Activated CD8-positive, alpha-beta memory T cell treated with anti-CD3 and anti-CD28 coated beads, Interleukin-2, amount 10 ng/mL, durations not matched to agents 7 days and 5 days (primary cell): ENCODE measurements at regions of chr9 and their contacts with region 1.

Region 1: GRCh38 chr9:136944519-136945279 is at the starts of genes C8G and FBXW5:
- DNase-seq: peak; percentile 96
- ATAC-seq: peak; percentile 81
- H3K4me3 Mint-ChIP-seq: peak within 1 kb of the TSS; percentile 79
- H3K27ac Mint-ChIP-seq: peak within 1 kb of the TSS; percentile 81
- H3K4me1 Mint-ChIP-seq: peaks cover 18% of the 10 kb centered on the region
- H3K27me3 Mint-ChIP-seq: no peaks in the 10 kb centered on the region
- total RNA-seq, gene C8G: 1.7 TPM in 1 of 2 experiments, not detected in the other
- total RNA-seq, gene FBXW5: 106 to 107 TPM

Region 2: GRCh38 chr9:136711751-136712689 is 232.7 kb before region 1 on chr9 and contains the start of gene DIPK1B:
- CTCF ChIA-PET with region 1: no interaction called
- DNase-seq: no peak
- ATAC-seq: peak; percentile 10
- H3K4me3 Mint-ChIP-seq: no peak within 1 kb of the TSS
- H3K27ac Mint-ChIP-seq: no peak within 1 kb of the TSS
- H3K4me1 Mint-ChIP-seq: peaks cover 3% of the 10 kb centered on the region
- H3K27me3 Mint-ChIP-seq: peaks cover 46% of the 10 kb centered on the region
- total RNA-seq, gene DIPK1B: not detected

Region 3: GRCh38 chr9:136728080-136728547 is 216.6 kb before region 1 on chr9:
- CTCF ChIA-PET with region 1: no interaction called
- DNase-seq: peak; percentile 92
- ATAC-seq: peak; percentile 79
- H3K4me3 Mint-ChIP-seq: peak overlapping the region; percentile 92
- H3K27ac Mint-ChIP-seq: no peak overlapping the region
- H3K4me1 Mint-ChIP-seq: peaks cover 38% of the 10 kb centered on the region
- H3K27me3 Mint-ChIP-seq: peaks cover 4% of the 10 kb centered on the region

Region 4: DNA sequence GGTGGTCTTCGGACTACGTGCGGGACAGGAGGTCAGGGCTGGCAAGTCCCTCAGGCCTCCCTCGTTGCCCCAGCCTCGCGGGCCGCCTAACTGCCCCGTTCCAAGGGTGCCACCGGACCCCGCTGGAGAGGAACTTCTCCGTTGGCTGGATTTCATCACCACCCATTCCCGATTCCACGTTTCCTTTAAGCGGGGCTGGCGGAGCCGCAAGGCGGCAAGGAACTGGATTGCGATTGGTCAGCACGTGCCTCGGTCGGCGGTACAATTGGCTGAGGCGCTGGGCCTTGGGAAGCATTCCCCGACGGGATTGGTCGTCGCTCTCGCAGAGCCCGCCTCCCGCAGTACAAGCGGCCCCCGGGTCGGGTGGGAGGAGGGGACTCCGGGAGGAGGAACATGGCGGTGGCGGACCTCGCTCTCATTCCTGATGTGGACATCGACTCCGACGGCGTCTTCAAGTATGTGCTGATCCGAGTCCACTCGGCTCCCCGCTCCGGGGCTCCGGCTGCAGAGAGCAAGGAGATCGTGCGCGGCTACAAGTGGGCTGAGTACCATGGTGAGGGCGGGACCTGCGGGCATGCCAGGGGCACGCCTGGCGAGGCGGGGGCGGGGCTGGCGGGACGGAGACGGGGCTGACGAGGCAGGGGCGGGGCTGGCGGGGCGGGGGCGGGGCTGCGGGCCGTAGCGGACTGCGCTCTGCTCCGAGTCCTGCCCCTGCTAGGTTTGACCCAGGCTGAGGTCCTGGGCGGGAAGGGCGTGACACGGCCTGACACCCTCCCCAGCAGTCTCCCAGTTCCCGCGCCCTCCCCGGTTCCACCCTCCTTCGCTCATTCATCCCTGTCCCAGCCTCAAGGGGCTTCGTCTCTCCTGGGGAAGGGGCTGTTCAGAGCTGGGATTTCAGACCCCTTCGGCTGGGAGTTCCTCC is 95.4 kb before region 1 on chr9 and contains the start of gene PHPT1:
- CTCF ChIA-PET with region 1: interaction called, 16 read pairs
- DNase-seq: peak; percentile 98
- ATAC-seq: peak; percentile 93
- H3K4me3 Mint-ChIP-seq: peak within 1 kb of the TSS; percentile 88
- H3K27ac Mint-ChIP-seq: peak within 1 kb of the TSS; percentile 92
- H3K4me1 Mint-ChIP-seq: peaks cover 16% of the 10 kb centered on the region
- H3K27me3 Mint-ChIP-seq: peaks cover 20% of the 10 kb centered on the region
- total RNA-seq, gene PHPT1: 96.8 to 116 TPM

Region 5: DNA sequence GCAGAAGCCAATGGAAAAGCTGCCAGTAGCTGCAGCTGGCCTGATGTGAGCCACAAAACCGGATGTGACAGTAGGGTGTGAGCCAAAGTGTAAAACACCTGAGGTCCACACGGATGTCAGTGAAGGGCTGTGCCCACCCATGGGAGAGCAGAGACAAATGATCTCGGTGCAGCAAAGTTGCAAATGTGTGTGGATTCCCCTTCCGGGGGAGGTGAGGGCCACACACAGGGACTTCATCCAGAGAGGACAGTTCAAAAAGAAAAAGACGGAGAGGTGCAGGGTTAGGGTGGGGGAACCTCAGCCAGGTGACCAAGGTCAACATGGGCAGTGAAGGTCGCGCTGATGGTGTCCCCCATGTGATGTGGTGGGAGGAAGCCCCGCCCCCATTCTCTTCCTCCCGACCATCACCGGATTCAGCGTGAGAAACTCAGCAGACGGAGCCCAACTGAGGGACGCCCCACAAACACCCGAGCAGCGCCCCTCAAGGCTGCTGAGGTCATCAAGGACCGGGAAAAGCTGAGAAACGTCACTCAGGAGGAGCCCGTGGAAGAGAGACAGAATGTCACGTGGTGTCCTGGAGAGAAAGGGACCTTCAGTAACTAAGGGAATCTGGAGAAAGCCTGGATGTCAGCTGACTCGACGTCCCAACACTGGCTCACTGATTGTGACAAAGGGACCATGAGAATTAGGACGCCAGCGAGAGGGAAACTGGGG is 21.2 kb after region 1 on chr9:
- CTCF ChIA-PET with region 1: interaction called, 15 read pairs
- DNase-seq: peak; percentile 81
- ATAC-seq: peak; percentile 72
- H3K4me3 Mint-ChIP-seq: peak overlapping the region; percentile 58
- H3K27ac Mint-ChIP-seq: peak overlapping the region; percentile 86
- H3K4me1 Mint-ChIP-seq: peaks cover 36% of the 10 kb centered on the region
- H3K27me3 Mint-ChIP-seq: no peaks in the 10 kb centered on the region

Region 6: GRCh38 chr9:136991993-136992818 is 47.5 kb after region 1 on chr9 and contains the start of gene PAXX:
- CTCF ChIA-PET with region 1: interaction called, 25 read pairs
- DNase-seq: peak; percentile 96
- ATAC-seq: peak; percentile 88
- H3K4me3 Mint-ChIP-seq: peak within 1 kb of the TSS; percentile 84
- H3K27ac Mint-ChIP-seq: peak within 1 kb of the TSS; percentile 82
- H3K4me1 Mint-ChIP-seq: peaks cover 32% of the 10 kb centered on the region
- H3K27me3 Mint-ChIP-seq: peaks cover 9% of the 10 kb centered on the region
- total RNA-seq, gene PAXX: 68.6 to 94.8 TPM

Region 7: DNA sequence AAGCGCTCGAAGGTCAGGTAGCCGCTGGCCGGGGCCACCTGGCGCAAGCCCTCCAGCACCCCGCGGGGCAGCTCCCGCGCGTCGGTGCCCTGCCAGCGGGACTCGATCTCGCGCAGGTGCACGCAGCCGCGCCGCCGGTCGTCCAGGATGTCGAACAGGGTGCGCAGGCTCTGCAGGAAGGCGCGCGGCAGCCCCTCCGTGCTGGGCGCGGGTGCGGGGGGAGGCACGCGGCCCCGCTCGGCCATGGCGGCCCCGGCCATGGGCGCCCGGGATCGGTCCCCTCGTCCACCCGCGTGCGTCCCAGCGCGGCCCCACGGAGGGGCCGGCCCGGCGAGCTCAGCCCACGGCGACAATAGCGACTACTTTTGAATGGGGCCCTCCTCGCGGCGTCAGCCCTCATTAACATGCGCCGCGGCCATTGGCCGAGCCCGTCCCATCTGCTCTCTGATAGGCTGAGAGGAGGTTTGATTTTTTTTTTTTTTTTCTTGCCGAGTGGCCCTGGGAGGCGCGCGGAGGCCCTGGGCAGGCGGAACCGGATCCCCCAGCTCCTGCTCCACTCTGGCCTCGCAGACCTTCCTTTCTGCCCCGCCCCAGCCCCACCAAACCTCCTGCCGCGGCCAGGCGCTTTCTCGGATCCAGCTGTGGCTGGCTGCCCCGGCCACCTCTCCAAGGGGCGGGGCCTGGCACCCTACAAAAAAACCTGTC is 125.7 kb after region 1 on chr9 and contains the start of gene SAPCD2:
- CTCF ChIA-PET with region 1: interaction called, 22 read pairs
- DNase-seq: peak; percentile 93
- ATAC-seq: peak; percentile 91
- H3K4me3 Mint-ChIP-seq: peak within 1 kb of the TSS; percentile 78
- H3K27ac Mint-ChIP-seq: peak within 1 kb of the TSS; percentile 83
- H3K4me1 Mint-ChIP-seq: peaks cover 27% of the 10 kb centered on the region
- H3K27me3 Mint-ChIP-seq: no peaks in the 10 kb centered on the region
- total RNA-seq, gene SAPCD2: 31.9 to 40.1 TPM

Region 8: DNA sequence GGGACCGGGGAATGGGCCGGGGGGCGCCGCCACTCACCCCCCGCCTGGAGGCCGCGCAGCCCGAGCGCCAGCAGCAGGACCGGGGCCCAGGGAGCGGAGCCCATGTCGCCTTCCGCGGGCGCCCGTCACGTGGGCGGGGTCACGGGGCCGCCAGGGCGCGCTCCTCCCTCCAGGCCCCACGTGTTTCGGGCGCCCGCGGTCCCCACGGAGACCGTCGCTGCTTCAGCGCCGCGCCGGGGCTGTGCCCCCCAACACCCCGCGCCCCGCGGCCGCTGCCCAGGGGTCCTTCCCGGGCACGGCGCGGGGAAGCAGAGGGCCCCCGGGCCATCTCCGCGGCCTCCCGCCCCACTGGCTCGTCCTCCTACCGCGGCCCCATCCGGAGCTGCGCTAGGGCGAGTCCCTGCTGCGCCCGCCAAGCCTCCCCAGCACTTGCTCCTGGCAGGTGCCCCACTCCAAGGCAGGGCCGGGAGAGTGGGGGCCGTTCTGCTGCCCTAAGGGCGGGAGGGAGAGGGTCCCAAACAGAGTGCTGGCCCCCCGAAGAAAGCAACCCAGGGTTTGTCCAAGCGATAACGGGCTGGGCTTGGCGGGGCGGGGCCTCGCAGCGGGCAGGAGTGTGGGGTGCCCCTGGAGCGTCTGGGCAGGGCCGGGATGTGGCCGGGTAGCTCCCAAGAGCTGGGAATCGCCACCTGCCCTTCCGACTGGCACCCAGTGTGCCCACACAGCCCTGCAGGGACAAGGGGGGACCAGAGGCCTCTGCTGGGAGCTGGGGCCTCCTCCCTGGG is 170.1 kb after region 1 on chr9 and contains the start of gene DPP7:
- CTCF ChIA-PET with region 1: no interaction called
- DNase-seq: peak; percentile 85
- ATAC-seq: peak; percentile 96
- H3K4me3 Mint-ChIP-seq: peak within 1 kb of the TSS; percentile 66
- H3K27ac Mint-ChIP-seq: peak within 1 kb of the TSS; percentile 52
- H3K4me1 Mint-ChIP-seq: peaks cover 10% of the 10 kb centered on the region
- H3K27me3 Mint-ChIP-seq: no peaks in the 10 kb centered on the region
- total RNA-seq, gene DPP7: 271 to 321 TPM

Region 9: DNA sequence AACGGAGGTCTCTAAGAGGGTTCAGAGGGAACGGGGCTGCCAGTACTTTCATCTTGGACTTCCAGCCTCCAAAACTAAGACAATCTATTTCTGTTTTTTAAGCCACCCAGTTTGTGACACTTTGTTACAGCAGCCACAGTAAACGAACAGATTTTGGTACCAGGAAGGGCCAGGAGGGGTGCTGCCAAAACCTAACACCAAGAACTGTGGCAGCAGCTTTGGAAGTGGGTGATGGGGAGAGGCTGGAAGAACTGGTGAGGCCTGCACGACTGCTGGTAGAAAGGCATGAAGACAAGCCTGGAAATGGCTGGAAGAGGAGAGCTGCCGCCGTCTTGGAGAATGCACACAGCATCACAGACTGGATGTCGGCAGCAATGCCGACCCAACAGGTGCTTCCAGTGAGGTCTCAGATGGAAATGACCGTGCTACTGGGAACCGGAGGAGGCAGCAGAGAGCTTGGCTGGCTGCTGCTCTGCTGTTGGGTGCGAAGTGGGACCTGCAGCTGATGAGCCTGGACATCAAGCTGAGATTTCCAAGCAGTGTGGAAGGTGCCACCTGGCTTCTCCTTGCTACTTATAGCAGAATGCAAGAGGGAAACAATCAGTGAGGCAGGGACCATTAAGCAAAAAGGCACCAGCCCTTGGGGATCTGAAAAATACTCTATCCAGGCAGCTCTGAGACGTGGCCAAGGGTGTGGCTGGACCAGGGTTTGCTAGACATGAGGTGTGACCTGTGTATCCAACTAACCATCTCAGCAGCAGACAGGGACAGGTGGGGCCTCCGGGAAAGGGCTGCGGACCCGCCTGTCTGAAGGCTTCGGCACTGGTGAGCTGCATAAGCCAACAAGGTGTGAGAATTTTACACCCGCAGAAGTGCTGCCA is 231.8 kb after region 1 on chr9:
- CTCF ChIA-PET with region 1: no interaction called
- DNase-seq: peak; percentile 54
- ATAC-seq: peak; percentile 71
- H3K4me3 Mint-ChIP-seq: no peak overlapping the region
- H3K27ac Mint-ChIP-seq: no peak overlapping the region
- H3K4me1 Mint-ChIP-seq: no peaks in the 10 kb centered on the region
- H3K27me3 Mint-ChIP-seq: peaks cover 20% of the 10 kb centered on the region